GM12878 (cell line): ENCODE measurements at regions of chr2 and their contacts with region 1.

Region 1: DNA sequence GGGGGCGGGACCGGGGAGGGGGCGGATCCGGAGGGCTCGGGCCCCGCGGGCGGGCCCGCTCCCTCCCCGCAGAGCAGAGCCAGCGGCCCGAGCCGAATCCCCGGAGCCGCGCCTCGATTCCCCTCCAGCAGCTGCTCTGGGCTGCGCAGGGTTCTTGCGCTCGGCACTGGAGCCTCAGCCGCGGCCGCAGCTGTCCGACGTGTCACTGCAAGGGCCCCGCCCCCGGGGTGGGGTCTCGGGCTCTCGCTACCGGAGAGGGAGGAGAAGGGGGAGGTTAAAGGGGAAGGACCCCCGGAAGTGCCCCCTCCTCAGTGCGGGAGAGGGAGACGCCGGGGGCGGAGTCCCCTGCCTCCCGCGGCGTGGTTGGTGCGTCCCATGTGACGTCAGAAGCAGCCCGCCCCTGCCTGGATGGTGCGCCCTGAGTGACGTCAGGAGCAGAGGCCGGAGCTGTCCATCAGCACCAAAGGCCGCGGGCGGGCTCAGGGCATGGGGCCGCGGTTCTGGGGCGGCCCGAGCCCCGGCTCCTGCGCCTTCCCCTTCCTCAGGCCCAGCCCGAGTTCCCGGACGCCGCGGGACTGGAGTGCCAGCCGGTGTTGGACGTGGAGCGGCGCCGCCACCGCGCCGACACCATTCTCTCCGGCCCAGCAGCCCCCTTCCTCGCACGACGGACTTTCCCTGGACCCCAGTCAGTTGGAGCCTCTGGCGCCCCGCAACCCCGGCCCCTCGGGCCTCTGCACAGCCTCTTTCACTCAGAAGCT is at the starts of genes CHPF and TMEM198:
- DNase-seq: peak; percentile 69
- ATAC-seq: peak; percentile 85
- H3K4me3 ChIP-seq: peak within 1 kb of the TSS; percentile 69
- H3K27ac ChIP-seq: no peak within 1 kb of the TSS
- H3K4me1 ChIP-seq: peaks cover 3% of the 10 kb centered on the region; the same call in 1 of the 2 replicates
- H3K27me3 ChIP-seq: peaks cover 0 to 7% of the 10 kb centered on the region in 2 experiments; a peak in 2 of 4 replicates
- CTCF ChIP-seq: no peak
- EP300 ChIP-seq: no peak
- POLR2A ChIP-seq: peak; percentile 61
- RAD21 ChIP-seq: no peak
- polyA plus RNA-seq, gene CHPF: 0.09 TPM in 1 of 2 experiments, not detected in the other
- polyA plus RNA-seq, gene TMEM198: not detected

Region 2: GRCh38 chr2:219530048-219530963 is 13.5 kb before region 1 on chr2:
- CTCF ChIA-PET with region 1: interaction called, 13 read pairs
- POLR2A ChIA-PET with region 1: no interaction called
- RAD21 ChIA-PET with region 1: interaction called, 4 read pairs
- SMC1A ChIA-PET with region 1: interaction called, 3 read pairs
- in situ Hi-C with region 1: no loop called
- intact Hi-C with region 1: no loop called
- DNase-seq: no peak
- ATAC-seq: peak; percentile 98
- H3K4me3 ChIP-seq: no peak overlapping the region
- H3K27ac ChIP-seq: no peak overlapping the region
- H3K4me1 ChIP-seq: no peaks in the 10 kb centered on the region
- H3K27me3 ChIP-seq: peaks cover 6 to 16% of the 10 kb centered on the region in 2 experiments
- CTCF ChIP-seq: peak; percentile 93 to 99 (median 94); a peak in 5 of 6 replicates
- EP300 ChIP-seq: no peak
- POLR2A ChIP-seq: no peak
- RAD21 ChIP-seq: peak; percentile 99

Region 3: GRCh38 chr2:219597552-219598307 is 54.0 kb after region 1 on chr2 and contains the start of gene STK11IP:
- CTCF ChIA-PET with region 1: interaction called, 5 read pairs
- POLR2A ChIA-PET with region 1: interaction called, 5 read pairs
- RAD21 ChIA-PET with region 1: interaction called, 3 read pairs
- SMC1A ChIA-PET with region 1: no interaction called
- in situ Hi-C with region 1: no loop called
- intact Hi-C with region 1: loop called (anchors 2 kb)
- DNase-seq: peak; percentile 84
- ATAC-seq: peak; percentile 96
- H3K4me3 ChIP-seq: peak within 1 kb of the TSS; percentile 74
- H3K27ac ChIP-seq: peak within 1 kb of the TSS; percentile 81
- H3K4me1 ChIP-seq: 0 out of 2 replicates have a peak, but pooled peaks cover 8% of the 10 kb centered on the region
- H3K27me3 ChIP-seq: no peaks in the 10 kb centered on the region
- CTCF ChIP-seq: no peak
- EP300 ChIP-seq: no peak
- POLR2A ChIP-seq: peak; percentile 97
- RAD21 ChIP-seq: no peak
- polyA plus RNA-seq, gene STK11IP: 0.42 to 1.6 TPM

Region 4: DNA sequence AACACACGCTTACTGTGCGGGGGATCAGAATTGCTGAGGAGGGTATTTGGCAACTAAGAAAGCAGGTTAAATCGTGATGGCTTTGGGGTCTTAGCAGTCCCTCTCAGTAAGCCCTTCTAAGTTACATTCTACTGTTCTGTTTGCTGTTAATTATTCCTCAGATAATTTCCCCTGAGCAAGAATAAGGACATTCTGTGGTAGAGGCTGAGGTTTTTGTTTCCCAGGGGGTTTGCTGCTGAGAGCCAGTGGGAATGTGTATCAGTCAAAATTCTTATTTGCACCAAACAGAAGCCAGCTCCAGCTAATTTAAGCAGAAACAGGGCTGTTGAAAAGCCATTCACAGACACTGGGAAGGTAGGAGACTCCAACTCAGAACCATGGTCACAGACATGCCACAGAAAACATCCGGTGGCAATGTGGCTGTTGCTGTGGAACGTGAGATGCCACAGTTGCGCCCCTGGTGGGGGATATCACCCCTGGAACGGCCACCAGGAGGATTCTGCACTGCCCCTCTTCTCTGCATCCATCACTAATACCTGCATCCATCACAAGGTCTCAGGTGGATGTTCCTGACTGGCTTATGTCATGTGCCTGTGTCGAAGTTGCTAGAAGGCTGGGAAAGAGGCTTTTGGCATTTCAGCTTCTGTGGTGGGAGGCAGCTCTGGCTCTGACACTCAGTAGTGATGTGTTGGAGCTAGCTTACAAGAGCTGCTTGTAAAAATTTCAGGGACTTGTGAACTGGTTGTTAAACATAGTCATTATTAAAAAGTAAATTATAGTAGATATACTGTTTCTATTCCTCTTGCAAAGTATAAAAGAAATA is 106.9 kb after region 1 on chr2:
- CTCF ChIA-PET with region 1: interaction called, 15 read pairs
- POLR2A ChIA-PET with region 1: no interaction called
- RAD21 ChIA-PET with region 1: no interaction called
- SMC1A ChIA-PET with region 1: no interaction called
- in situ Hi-C with region 1: no loop called
- intact Hi-C with region 1: no loop called
- DNase-seq: no peak
- ATAC-seq: no peak
- H3K4me3 ChIP-seq: no peak overlapping the region
- H3K27ac ChIP-seq: no peak overlapping the region
- H3K4me1 ChIP-seq: no peaks in the 10 kb centered on the region
- H3K27me3 ChIP-seq: peaks cover 0 to 2% of the 10 kb centered on the region in 2 experiments; a peak in 1 of 4 replicates
- CTCF ChIP-seq: no peak
- EP300 ChIP-seq: no peak
- POLR2A ChIP-seq: no peak
- RAD21 ChIP-seq: no peak